ENCODE measurements at regions of chr10 and their contacts with region 1.

Region 1: DNA sequence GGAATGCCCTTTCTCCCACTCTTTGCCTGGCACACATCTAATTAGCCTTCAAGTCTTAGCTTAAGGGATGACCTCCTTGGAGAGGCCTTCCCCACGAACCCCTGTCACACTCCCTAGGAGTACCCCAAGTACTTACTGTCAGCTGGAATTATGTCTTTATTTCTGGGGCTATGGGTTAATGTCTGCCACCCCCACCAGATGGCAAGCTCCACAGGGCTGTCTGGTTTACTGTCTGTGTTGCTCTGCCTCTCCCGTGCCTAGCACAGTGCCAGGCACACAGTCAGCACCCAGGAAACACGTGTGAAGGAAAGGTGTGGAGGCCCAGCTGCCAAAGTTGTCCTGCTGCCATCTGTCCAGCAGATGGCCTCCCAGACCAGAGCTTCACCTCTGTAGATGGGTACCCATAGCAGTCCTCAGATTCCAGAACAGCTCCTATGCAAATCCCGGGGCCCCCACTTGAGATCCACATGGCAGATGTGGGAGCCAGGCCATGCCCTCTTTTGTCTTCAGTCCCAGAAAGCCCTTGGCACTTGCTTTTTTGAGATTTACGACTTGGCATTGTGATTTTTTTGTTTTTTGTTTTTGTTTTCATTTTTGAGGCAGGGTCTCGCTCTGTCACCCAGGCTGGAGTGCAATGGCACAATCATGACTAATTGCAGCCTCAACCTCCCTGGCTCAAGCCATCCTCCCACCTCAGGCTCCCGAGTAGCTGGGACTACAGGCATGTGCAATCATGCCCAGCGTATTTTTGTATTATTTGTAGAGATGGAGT is 17.2 kb upstream of the PALD1 start:
- DNase-seq: peak in 2 of 3 donors; percentile 46 to 61
- ATAC-seq: peak; percentile 78 to 83 (median 80)
- H3K4me3 ChIP-seq: no peak overlapping the region
- H3K27ac ChIP-seq: no peak overlapping the region
- H3K4me1 ChIP-seq: peaks cover 0 to 10% (median 0%) of the 10 kb centered on the region in 4 donors
- H3K27me3 ChIP-seq: no peaks in the 10 kb centered on the region
- CTCF ChIP-seq: peak; percentile 71 to 86 (median 78)
- POLR2A ChIP-seq: no peak

Region 2: DNA sequence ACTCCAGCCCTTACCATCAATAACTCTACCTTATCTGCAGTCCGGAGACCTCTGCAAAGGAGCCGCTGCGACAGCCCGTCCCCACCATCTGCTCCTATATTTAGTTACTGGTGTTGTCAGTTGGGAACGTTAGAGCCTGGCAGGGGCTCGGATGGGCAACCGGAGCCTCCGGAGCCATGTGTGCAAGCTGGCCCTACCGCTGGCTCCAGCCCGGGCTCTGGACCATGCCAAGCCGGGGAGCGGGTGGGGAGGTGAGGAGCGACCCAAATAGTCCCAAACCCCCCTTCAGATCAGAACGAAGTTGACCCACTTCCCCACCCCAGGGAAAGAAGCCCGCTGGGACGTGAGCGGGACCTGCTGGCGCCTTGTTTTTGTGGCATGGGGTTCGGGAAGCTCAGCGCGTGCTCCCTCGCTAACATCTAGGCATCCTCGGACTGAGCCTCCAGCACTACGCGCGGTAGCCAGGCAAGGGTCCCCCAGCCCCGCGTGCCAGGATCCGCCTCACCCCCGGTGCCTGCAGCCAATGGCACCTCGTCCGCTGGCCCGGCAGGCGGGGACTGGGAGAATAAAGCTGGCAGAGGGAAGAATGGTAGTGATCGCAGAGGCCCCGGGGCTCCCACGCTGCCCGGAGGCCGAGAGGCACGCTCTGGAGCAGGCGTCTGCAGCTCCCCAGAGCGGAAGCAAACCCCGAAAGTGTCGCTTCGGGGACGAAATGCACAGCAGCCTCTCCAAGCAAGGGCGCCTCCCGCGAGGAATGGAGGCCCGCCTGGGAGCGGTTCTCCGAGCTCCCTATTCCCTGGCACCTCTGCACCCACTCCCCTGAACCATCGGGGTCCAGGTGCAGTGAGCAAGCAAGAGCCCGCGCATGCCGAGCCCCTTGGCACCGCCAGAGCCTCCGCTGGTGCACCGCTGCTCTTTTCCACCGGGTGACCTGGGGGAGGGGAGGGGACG is 79.7 kb before region 1 on chr10:
- intact Hi-C with region 1: no loop called
- DNase-seq: peak; percentile 41 to 61 (median 53)
- ATAC-seq: peak; percentile 21 to 63 (median 40)
- H3K4me3 ChIP-seq: peak overlapping the region; percentile 67 to 79 (median 77)
- H3K27ac ChIP-seq: no peak overlapping the region
- H3K4me1 ChIP-seq: peaks cover 0 to 7% (median 0%) of the 10 kb centered on the region in 4 donors
- H3K27me3 ChIP-seq: no peaks in the 10 kb centered on the region
- CTCF ChIP-seq: no peak
- POLR2A ChIP-seq: no peak

Region 3: DNA sequence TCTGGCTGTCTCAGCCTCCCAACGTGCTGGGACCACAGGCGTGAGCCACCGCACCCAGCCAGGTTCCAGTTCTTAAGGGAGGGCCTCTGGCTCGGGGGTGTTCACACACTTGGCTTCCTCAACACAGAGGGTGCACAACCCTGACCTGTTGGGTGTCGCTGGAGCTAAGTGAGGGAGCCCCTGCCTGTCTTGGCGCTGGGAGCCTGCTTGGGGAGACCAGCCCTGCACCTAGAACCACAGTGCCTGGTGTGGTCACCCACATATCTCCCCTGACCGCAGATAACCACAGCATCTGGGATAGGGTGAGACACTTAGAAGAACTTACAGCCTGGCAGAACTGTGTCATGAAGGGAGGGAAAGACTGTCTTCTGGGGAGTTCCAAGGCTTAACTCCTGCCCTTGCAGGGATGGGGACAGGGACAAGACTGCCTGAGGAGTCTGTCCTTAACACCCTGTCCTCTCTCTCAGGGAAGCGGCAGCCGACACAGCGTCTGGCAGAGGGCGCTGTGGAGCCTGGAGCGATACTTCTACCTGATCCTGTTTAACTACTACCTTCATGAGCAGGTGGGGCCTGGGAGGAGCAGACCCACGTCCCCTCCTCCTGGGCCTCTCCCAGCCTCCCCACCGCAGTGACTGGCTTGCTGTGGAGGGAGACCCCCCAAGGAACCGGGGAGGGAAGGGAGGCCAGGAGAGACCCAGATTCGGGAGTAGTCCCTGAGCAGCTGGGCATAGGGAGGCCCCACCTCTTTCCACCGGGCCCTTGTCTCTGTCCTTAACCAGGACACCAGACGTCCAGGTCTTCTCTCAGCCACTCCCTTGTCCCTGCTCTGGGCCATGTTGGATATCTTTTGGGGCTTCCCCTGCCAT is 76.2 kb after region 1 on chr10:
- intact Hi-C with region 1: loop called (anchors 5 kb)
- DNase-seq: no peak
- ATAC-seq: peak in 2 of 4 donors; percentile 13 to 14
- H3K4me3 ChIP-seq: no peak overlapping the region
- H3K27ac ChIP-seq: no peak overlapping the region
- H3K4me1 ChIP-seq: peaks cover 0 to 7% (median 0%) of the 10 kb centered on the region in 4 donors
- H3K27me3 ChIP-seq: no peaks in the 10 kb centered on the region
- CTCF ChIP-seq: peak in 3 of 4 donors; percentile 9 to 21 (median 13)
- POLR2A ChIP-seq: no peak

Region 4: GRCh38 chr10:70758757-70759514 is 297.5 kb after region 1 on chr10:
- intact Hi-C with region 1: loop called in 1 of 2 experiments (anchors 10 kb)
- DNase-seq: peak in 2 of 3 donors; percentile 49 to 66
- ATAC-seq: peak; percentile 49 to 76 (median 67)
- H3K4me3 ChIP-seq: no peak overlapping the region
- H3K27ac ChIP-seq: no peak overlapping the region
- H3K4me1 ChIP-seq: peaks cover 0 to 14% (median 0%) of the 10 kb centered on the region in 4 donors
- H3K27me3 ChIP-seq: no peaks in the 10 kb centered on the region
- CTCF ChIP-seq: peak; percentile 56 to 82 (median 64)
- POLR2A ChIP-seq: no peak